Activated naive CD4-positive, alpha-beta T cell treated with anti-CD3 and anti-CD28 coated beads for 36 hours (primary cell): ENCODE measurements at regions of chr12 and their contacts with region 1.

Region 1: DNA sequence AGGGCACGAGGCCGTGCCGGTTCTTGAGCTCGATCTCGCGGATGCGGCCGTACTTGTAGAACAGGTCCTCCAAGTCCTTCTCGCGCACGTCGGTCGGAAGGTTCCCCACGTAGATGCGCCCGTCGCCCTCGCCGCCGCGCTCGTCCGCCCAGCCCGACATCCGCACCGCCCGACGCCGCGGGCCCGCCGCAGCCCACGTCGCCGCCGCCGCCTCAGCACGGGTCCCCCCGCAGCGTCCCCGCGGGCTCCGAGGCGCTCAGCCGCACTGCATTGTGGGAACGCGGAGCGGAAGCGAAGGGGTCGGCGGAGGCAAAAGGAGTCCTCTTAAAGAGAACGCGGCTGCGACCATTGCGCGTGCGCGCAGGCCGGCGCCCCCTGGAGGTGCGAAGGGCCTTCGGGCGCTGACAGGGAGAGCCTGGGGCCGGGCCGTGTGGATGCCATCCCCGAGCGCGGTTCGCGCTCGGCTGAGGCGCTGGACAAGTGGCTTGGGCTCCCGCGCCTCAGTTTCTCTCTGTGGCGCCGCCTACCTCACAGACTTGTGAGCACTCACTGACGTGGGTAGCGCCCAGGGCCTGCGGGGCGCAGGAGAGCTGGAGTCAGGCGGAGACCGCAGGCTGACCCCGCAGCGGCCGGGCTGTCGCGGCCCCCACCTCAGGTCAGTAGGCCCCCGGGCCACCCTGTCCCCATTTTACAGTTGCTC is at the start of gene SRSF9:
- DNase-seq: peak; percentile 96
- H3K4me3 Mint-ChIP-seq: peak within 1 kb of the TSS; percentile 90
- H3K27ac Mint-ChIP-seq: peak within 1 kb of the TSS; percentile 87
- H3K4me1 Mint-ChIP-seq: peaks cover 37% of the 10 kb centered on the region
- H3K27me3 Mint-ChIP-seq: no peaks in the 10 kb centered on the region
- total RNA-seq, gene SRSF9: 164 to 171 TPM

Region 2: DNA sequence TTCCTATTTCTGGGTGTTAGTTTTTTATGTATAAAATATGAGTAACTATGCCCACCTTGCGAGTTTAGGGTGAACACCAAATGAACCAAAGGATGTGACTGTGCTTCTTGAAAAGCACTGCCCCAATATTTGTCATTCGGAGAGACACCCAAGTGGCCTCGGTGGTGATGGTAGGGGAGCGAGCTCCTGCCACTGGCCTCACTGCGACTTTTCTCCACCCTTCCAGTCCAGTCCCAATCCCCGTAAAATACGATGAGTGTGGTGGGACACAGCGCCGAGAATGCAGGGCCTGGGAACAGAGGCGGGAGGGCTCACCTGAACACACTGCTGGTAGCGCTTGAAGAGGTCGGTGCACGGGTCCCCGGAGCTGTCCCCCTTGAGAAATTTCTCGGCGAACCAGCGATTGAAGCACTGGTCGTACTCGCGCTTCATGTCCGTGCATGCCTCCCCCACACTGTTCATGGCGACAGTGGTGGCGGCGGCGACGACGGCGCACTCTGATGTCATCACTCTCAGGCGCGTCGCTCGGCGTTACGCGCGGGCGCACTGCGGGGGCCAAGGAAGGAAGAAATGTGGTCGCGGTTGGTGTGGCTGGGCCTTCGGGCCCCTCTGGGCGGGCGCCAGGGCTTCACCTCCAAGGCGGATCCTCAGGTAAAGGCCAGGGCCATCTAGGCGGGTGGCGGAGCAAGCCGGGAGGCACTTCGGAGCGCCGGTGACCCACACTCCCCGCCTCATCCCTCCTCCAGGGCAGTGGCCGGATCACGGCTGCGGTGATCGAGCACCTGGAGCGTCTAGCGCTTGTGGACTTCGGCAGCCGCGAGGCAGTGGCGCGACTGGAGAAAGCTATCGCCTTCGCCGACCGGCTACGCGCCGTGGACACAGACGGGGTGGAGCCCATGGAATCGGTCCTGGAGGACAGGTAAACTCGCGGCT is 23.4 kb before region 1 on chr12 and contains the starts of genes GATC and TRIAP1:
- CTCF ChIA-PET with region 1: interaction called, 121 read pairs
- intact Hi-C with region 1: loop called (anchors 2 kb)
- DNase-seq: peak; percentile 90
- H3K4me3 Mint-ChIP-seq: peak within 1 kb of the TSS; percentile 95
- H3K27ac Mint-ChIP-seq: peak within 1 kb of the TSS; percentile 95
- H3K4me1 Mint-ChIP-seq: peaks cover 47% of the 10 kb centered on the region
- H3K27me3 Mint-ChIP-seq: no peaks in the 10 kb centered on the region
- total RNA-seq, gene GATC: 33.1 to 35.3 TPM
- total RNA-seq, gene TRIAP1: 56.8 to 59.2 TPM

Region 3: GRCh38 chr12:120453977-120454376 is 15.6 kb before region 1 on chr12:
- CTCF ChIA-PET with region 1: interaction called, 121 read pairs
- intact Hi-C with region 1: no loop called
- DNase-seq: peak; percentile 40
- H3K4me3 Mint-ChIP-seq: no peak overlapping the region
- H3K27ac Mint-ChIP-seq: no peak overlapping the region
- H3K4me1 Mint-ChIP-seq: peaks cover 10% of the 10 kb centered on the region
- H3K27me3 Mint-ChIP-seq: no peaks in the 10 kb centered on the region

Region 4: GRCh38 chr12:120495723-120496412 is 26.3 kb after region 1 on chr12 and contains the start of gene DYNLL1:
- CTCF ChIA-PET with region 1: interaction called, 11 read pairs
- intact Hi-C with region 1: loop called (anchors 1 kb)
- DNase-seq: peak; percentile 97
- H3K4me3 Mint-ChIP-seq: peak within 1 kb of the TSS; percentile 84
- H3K27ac Mint-ChIP-seq: peak within 1 kb of the TSS; percentile 77
- H3K4me1 Mint-ChIP-seq: peaks cover 21% of the 10 kb centered on the region
- H3K27me3 Mint-ChIP-seq: no peaks in the 10 kb centered on the region
- total RNA-seq, gene DYNLL1: 93.4 to 93.5 TPM